ENCODE measurements at regions of chr5 and their contacts with region 1.

Region 1: GRCh38 chr5:88690409-88691229 is 192.4 kb downstream of the MEF2C start:
- DNase-seq: peak; percentile 81
- H3K4me3 ChIP-seq: peak overlapping the region; percentile 24 to 57
- H3K27ac ChIP-seq: no peak overlapping the region
- H3K4me1 ChIP-seq: peaks cover 5 to 14% of the 10 kb centered on the region in 2 experiments; a peak in 1 of 4 replicates
- H3K27me3 ChIP-seq: peaks cover 94% of the 10 kb centered on the region
- CTCF ChIP-seq: peak; percentile 96
- EP300 ChIP-seq: no peak
- RAD21 ChIP-seq: peak; percentile 79

Region 2: DNA sequence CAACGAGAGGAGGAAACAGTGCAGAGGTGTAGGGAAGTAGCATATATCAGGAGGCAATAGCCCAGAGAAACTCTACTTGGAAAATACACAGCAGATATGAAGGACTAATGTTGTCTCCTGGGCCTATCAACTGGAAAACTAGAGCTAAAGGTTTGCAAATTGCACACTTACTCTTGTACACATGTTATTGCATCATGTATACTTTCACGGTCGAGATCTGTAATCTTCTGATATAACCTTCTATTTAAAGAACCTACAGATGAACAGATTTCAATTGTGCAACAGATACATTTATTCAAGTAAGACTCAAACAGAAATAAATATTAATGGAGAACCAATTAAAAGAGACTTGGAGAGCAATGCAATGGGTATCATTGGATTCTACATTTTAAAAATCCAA is 165.7 kb before region 1 on chr5:
- CTCF ChIA-PET with region 1: no interaction called
- POLR2A ChIA-PET with region 1: no interaction called
- DNase-seq: no peak
- H3K4me3 ChIP-seq: no peak overlapping the region
- H3K27ac ChIP-seq: no peak overlapping the region
- H3K4me1 ChIP-seq: no peaks in the 10 kb centered on the region
- H3K27me3 ChIP-seq: no peaks in the 10 kb centered on the region
- CTCF ChIP-seq: no peak
- EP300 ChIP-seq: no peak
- RAD21 ChIP-seq: no peak

Region 3: DNA sequence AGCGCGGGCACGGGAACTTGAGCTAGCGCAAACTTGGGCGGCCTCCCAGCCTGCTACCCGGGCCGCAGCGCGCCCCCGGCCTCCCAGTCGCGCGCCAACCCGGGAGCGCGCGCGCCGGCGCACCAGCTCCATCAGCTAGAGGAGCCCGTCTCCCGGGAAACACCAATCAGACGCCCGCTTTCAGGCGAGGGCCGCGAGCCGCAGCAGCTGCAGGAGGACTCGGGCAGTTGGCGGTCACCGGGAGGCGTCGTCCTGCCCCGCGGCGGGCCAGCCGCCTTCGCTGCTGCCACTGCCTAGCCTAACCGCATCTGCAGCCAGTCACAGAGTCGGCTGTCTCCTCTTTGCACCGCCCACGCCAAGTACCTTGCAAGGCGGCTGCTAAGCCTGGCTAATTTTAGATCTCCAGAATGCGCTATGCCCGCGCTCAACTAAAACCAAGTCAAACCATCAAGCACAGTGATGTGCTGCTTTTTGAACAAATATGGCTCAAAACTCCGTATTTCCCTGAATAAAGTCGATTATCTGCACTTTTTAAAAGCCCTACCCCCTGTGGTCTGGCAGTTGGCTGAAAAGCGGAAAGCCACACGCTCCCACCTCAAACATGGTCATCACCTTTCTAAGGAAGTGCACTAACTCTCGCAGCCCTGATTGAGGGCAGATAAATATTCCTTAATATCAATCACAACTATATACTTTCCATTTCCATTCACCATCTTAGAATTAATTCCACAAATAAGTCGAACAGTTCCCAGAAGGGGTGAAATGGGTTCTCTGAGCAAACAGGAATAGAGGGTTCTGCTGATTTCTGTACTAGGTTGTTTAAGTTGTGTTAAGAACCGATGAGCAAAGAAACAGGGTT is 29.4 kb before region 1 on chr5:
- CTCF ChIA-PET with region 1: interaction called, 15 read pairs
- POLR2A ChIA-PET with region 1: no interaction called
- DNase-seq: peak; percentile 98
- H3K4me3 ChIP-seq: peak overlapping the region; percentile 48 to 64
- H3K27ac ChIP-seq: no peak overlapping the region
- H3K4me1 ChIP-seq: peaks cover 0 to 7% of the 10 kb centered on the region in 2 experiments; a peak in 1 of 4 replicates
- H3K27me3 ChIP-seq: peaks cover 45% of the 10 kb centered on the region
- CTCF ChIP-seq: no peak
- EP300 ChIP-seq: no peak
- RAD21 ChIP-seq: no peak

Region 4: GRCh38 chr5:88673253-88674105 is 17.1 kb before region 1 on chr5:
- CTCF ChIA-PET with region 1: interaction called, 21 read pairs
- POLR2A ChIA-PET with region 1: no interaction called
- DNase-seq: no peak
- H3K4me3 ChIP-seq: no peak overlapping the region; a peak in 1 of 4 replicates
- H3K27ac ChIP-seq: no peak overlapping the region
- H3K4me1 ChIP-seq: peaks cover 0 to 13% of the 10 kb centered on the region in 2 experiments; a peak in 1 of 4 replicates
- H3K27me3 ChIP-seq: peaks cover 73% of the 10 kb centered on the region
- CTCF ChIP-seq: no peak
- EP300 ChIP-seq: no peak
- RAD21 ChIP-seq: no peak

Region 5: DNA sequence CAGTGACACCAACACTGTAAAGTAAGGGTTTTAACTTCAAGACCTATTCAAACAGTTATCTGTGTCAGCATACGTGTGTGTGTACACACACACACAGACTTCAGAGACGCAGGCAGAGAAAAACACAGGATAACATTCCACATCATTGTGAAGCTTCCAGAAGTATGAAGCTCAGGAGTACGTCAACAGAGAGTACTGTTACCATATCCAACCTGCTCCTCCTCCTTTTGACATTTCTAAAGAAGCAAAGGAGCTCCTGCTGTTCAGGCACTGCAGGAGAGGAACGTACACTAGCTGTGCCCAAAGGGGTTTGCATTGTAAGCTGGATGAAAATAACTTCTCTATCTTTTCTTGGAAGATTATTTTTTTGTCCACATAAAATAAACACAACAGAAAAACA is 11.7 kb after region 1 on chr5:
- CTCF ChIA-PET with region 1: interaction called, 37 read pairs
- POLR2A ChIA-PET with region 1: no interaction called
- DNase-seq: no peak
- H3K4me3 ChIP-seq: no peak overlapping the region
- H3K27ac ChIP-seq: no peak overlapping the region
- H3K4me1 ChIP-seq: no peaks in the 10 kb centered on the region; a peak in 1 of 4 replicates
- H3K27me3 ChIP-seq: peaks cover 5% of the 10 kb centered on the region; the same call in 1 of the 2 replicates
- CTCF ChIP-seq: no peak
- EP300 ChIP-seq: no peak
- RAD21 ChIP-seq: no peak

Region 6: GRCh38 chr5:88729084-88729828 is 38.6 kb after region 1 on chr5:
- CTCF ChIA-PET with region 1: interaction called, 14 read pairs
- POLR2A ChIA-PET with region 1: no interaction called
- DNase-seq: peak; percentile 29
- H3K4me3 ChIP-seq: no peak overlapping the region; a peak in 1 of 4 replicates
- H3K27ac ChIP-seq: no peak overlapping the region
- H3K4me1 ChIP-seq: peaks cover 0 to 8% of the 10 kb centered on the region in 2 experiments; a peak in 2 of 4 replicates
- H3K27me3 ChIP-seq: no peaks in the 10 kb centered on the region
- CTCF ChIP-seq: peak; percentile 90
- EP300 ChIP-seq: no peak
- RAD21 ChIP-seq: peak; percentile 94

Region 7: DNA sequence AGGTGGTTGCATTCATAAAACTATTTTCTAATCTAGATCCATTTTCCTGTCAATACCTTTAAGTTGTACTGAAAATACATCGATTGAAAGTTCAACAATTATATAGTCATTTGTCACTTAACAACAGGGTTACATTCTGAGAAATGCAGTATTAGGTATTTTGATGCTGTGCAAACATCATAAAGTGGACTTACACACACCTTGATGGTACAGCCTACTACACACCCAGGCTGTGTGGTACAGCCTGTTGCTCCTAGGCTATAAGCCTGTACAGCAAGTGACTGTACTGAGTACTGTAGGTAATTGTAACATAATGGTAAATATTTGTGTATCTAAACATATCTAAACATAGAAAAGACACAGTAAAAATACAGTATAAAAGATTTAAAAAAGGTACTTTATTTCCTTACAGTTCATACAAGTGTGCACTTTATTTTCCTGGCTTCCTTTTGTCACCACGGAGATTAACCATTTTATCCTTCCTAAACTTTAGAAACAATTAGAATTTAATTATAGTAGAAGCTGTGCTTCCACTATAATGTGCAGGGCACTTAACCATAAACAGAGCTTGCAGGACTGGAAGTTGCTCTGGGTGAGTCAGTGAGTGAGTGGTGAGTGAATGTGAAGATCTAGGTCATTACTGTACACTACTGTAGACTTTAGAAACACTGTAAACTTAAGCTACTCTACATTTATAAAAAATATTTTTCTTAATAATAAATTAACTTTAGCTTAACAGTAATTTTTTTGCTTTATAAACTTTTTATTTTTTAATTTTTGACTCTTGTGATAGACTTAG is 235.3 kb after region 1 on chr5:
- CTCF ChIA-PET with region 1: no interaction called
- POLR2A ChIA-PET with region 1: no interaction called
- DNase-seq: no peak
- H3K4me3 ChIP-seq: no peak overlapping the region
- H3K27ac ChIP-seq: no peak overlapping the region
- H3K4me1 ChIP-seq: no peaks in the 10 kb centered on the region
- H3K27me3 ChIP-seq: no peaks in the 10 kb centered on the region
- CTCF ChIP-seq: no peak
- EP300 ChIP-seq: no peak
- RAD21 ChIP-seq: no peak